HCT116 (cell line): ENCODE measurements at regions of chr9 and their contacts with region 1.

Region 1: DNA sequence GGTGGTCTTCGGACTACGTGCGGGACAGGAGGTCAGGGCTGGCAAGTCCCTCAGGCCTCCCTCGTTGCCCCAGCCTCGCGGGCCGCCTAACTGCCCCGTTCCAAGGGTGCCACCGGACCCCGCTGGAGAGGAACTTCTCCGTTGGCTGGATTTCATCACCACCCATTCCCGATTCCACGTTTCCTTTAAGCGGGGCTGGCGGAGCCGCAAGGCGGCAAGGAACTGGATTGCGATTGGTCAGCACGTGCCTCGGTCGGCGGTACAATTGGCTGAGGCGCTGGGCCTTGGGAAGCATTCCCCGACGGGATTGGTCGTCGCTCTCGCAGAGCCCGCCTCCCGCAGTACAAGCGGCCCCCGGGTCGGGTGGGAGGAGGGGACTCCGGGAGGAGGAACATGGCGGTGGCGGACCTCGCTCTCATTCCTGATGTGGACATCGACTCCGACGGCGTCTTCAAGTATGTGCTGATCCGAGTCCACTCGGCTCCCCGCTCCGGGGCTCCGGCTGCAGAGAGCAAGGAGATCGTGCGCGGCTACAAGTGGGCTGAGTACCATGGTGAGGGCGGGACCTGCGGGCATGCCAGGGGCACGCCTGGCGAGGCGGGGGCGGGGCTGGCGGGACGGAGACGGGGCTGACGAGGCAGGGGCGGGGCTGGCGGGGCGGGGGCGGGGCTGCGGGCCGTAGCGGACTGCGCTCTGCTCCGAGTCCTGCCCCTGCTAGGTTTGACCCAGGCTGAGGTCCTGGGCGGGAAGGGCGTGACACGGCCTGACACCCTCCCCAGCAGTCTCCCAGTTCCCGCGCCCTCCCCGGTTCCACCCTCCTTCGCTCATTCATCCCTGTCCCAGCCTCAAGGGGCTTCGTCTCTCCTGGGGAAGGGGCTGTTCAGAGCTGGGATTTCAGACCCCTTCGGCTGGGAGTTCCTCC is at the start of gene PHPT1:
- DNase-seq: peak; percentile 98
- ATAC-seq: peak; percentile 76
- H3K4me3 ChIP-seq: peak within 1 kb of the TSS; percentile 85 to 99
- H3K27ac ChIP-seq: peak within 1 kb of the TSS; percentile 88
- H3K4me1 ChIP-seq: peaks cover 4 to 17% of the 10 kb centered on the region in 2 experiments; a peak in 2 of 4 replicates
- H3K27me3 ChIP-seq: no peaks in the 10 kb centered on the region
- CTCF ChIP-seq: no peak
- POLR2A ChIP-seq: peak; percentile 76
- RAD21 ChIP-seq: no peak
- total RNA-seq, gene PHPT1: 148 TPM

Region 2: DNA sequence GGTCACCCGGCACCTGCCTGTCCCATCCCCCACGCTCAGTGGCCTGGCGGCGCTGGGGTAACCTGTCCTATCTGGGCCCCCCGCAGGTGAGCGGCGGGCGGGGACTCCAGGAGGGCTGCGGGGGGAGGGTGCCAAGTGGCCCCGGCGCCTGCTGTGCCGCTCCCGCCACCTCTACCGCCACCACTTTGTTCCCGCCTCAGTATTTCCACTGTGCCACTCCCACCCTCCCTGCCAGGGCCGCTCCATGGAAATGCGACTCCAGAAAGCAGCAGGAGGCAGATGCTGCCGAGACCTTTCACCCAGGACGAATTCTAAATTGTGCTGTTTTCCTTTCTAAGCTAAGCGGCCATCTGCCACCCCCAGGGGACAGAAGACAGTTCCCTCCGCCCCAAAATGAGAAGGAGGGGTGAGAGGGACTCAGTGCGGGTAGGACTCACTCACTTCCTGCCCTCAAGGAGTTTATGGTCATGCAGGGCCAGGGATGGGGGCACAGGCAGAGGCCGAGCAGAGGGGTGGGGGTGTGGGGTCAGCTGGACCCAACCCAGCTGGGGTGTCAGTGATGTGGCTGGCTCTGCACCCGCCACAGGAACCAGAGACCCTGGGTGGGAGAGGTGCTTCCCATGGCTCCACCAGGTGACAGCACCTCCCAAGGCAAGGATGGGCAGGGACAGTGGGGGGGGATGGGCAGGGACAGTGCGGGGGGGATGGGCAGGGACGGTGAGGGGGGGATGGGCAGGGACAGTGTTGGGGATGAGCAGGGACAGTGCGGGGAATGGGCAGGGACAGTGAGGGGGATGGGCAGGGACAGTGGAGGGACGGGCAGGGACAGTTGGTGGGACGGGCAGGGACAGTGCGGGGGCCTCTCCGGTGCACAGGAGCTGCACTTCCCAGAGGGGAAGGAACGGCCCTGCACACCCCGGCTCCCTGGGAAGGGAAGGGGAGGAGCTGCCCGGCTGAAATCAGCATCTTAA is 321.3 kb before region 1 on chr9:
- CTCF ChIA-PET with region 1: no interaction called
- POLR2A ChIA-PET with region 1: no interaction called
- RAD21 ChIA-PET with region 1: no interaction called
- intact Hi-C with region 1: no loop called
- DNase-seq: no peak
- ATAC-seq: peak; percentile 69
- H3K4me3 ChIP-seq: peak overlapping the region; percentile 11 to 37; a peak in 2 of 4 replicates
- H3K27ac ChIP-seq: peak overlapping the region; percentile 65
- H3K4me1 ChIP-seq: peaks cover 38 to 56% of the 10 kb centered on the region in 2 experiments
- H3K27me3 ChIP-seq: no peaks in the 10 kb centered on the region
- CTCF ChIP-seq: no peak
- POLR2A ChIP-seq: no peak
- RAD21 ChIP-seq: no peak

Region 3: DNA sequence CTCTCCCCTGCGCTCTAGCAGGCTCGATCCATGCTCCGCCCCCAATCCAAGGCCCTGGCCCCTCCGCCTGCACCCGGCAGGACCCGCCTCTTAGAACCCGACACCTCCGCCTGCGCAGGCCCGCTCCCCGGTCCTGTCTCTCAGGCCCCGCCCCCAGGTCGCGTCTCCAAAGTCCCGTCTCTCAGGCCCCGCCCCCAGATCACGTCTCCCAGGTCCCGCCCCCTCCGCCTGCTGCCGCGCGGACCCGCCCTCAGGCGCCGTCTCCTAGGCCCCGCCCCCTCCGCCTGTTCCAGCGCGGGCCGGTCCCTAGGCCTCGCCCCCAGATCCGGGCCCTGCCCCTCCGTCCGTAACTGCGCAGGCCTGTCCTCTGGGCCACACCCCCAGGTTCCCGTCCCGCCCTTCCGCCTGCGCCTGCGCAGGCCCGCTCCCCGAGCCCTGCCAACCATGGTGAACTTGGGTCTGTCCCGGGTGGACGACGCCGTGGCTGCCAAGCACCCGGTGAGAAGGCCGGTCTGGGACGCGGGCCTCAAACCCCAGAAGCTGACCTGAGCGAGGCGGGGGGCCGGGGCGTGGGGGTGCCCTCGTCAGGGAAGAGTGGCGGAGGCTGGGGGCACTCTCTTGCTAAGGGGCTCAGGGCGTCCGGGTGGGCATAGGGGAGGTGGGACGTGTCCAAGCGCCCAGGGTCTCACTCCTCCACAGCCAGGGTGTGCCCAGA is 58.2 kb before region 1 on chr9 and contains the start of gene TMEM141:
- CTCF ChIA-PET with region 1: interaction called, 5 read pairs
- POLR2A ChIA-PET with region 1: no interaction called
- RAD21 ChIA-PET with region 1: no interaction called
- intact Hi-C with region 1: loop called (anchors 2 kb)
- DNase-seq: peak; percentile 98
- ATAC-seq: peak; percentile 88
- H3K4me3 ChIP-seq: peak within 1 kb of the TSS; percentile 83 to 84
- H3K27ac ChIP-seq: peak within 1 kb of the TSS; percentile 79
- H3K4me1 ChIP-seq: peaks cover 14 to 40% of the 10 kb centered on the region in 2 experiments; a peak in 3 of 4 replicates
- H3K27me3 ChIP-seq: no peaks in the 10 kb centered on the region
- CTCF ChIP-seq: no peak
- POLR2A ChIP-seq: peak; percentile 46
- RAD21 ChIP-seq: no peak
- total RNA-seq, gene TMEM141: 73.6 TPM

Region 4: GRCh38 chr9:136916330-136917184 is 67.3 kb after region 1 on chr9:
- CTCF ChIA-PET with region 1: no interaction called
- POLR2A ChIA-PET with region 1: no interaction called
- RAD21 ChIA-PET with region 1: no interaction called
- intact Hi-C with region 1: no loop called
- DNase-seq: no peak
- ATAC-seq: no peak
- H3K4me3 ChIP-seq: no peak overlapping the region
- H3K27ac ChIP-seq: no peak overlapping the region
- H3K4me1 ChIP-seq: no peaks in the 10 kb centered on the region
- H3K27me3 ChIP-seq: no peaks in the 10 kb centered on the region
- CTCF ChIP-seq: no peak
- POLR2A ChIP-seq: no peak
- RAD21 ChIP-seq: no peak

Region 5: DNA sequence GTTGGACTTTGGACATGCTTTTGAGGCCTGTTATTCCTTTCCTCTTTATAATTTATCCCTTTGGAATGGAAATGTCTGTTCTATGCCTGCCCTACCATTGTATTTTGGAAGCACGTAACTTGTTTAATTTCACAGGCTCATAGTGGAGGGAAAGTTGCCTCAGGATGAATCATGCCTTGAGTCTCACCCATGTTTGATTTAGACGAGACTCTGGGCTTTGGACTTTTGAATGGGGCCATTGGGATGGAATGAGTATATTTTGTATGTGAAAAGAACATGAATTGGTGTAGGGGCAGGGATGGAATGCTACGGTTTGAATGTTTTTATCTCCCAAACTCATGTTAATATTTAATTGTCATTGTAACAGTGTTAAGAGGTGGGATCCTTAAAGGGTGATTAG is 84.9 kb after region 1 on chr9:
- CTCF ChIA-PET with region 1: no interaction called
- POLR2A ChIA-PET with region 1: no interaction called
- RAD21 ChIA-PET with region 1: no interaction called
- intact Hi-C with region 1: no loop called
- DNase-seq: no peak
- ATAC-seq: no peak
- H3K4me3 ChIP-seq: no peak overlapping the region
- H3K27ac ChIP-seq: no peak overlapping the region
- H3K4me1 ChIP-seq: no peaks in the 10 kb centered on the region
- H3K27me3 ChIP-seq: no peaks in the 10 kb centered on the region
- CTCF ChIP-seq: no peak
- POLR2A ChIP-seq: no peak
- RAD21 ChIP-seq: no peak

Region 6: DNA sequence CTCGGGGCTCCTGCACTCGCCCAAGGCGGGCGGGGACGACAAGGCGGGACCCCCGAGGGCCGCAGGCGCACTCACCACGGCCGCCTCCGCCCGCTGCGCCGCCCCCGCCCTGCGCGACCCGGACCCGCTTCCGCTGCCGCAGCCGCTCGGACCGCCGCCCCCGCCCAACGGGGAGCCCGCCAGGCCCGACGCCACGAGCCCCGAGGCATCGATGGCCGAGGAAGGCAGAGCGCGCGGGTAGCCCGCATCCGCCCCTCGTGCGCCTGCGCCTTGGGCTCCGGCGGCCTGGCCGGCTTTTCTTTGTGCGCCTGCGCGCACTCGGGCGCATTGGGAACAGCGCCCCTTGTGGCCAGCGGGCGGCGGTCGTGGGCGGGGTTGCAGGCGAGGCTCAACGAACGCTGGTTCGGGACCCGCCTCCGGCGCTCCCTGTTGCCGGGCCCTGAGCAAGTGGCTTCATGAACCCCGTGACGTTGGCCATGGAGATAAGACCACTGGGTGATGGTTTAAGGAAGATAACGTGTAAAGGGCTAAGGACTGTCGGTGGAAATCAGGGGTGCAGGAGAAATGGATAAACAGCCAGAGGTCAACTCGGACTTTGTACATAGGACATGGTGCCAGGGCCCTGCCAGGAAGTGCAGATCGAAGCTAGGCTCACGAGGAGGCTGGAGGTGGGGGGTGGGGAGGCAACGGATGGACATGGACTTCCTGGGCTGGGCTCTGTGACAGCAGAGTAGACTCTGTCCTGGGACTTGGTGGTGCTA is 95.4 kb after region 1 on chr9 and contains the starts of genes C8G and FBXW5:
- CTCF ChIA-PET with region 1: no interaction called
- POLR2A ChIA-PET with region 1: no interaction called
- RAD21 ChIA-PET with region 1: no interaction called
- intact Hi-C with region 1: loop called (anchors 10 kb)
- DNase-seq: peak; percentile 80
- ATAC-seq: peak; percentile 75
- H3K4me3 ChIP-seq: peak within 1 kb of the TSS; percentile 78 to 88
- H3K27ac ChIP-seq: peak within 1 kb of the TSS; percentile 97
- H3K4me1 ChIP-seq: peaks cover 21 to 43% of the 10 kb centered on the region in 2 experiments
- H3K27me3 ChIP-seq: no peaks in the 10 kb centered on the region
- CTCF ChIP-seq: peak in 2 of 3 experiments; percentile 86 to 95; a peak in 4 of 6 replicates
- POLR2A ChIP-seq: peak; percentile 31
- RAD21 ChIP-seq: no peak
- total RNA-seq, gene C8G: 2.1 TPM
- total RNA-seq, gene FBXW5: 88.0 TPM